Heart left ventricle (tissue), 16 donors: ENCODE measurements at regions of chr20 and their contacts with region 1.

Region 1: DNA sequence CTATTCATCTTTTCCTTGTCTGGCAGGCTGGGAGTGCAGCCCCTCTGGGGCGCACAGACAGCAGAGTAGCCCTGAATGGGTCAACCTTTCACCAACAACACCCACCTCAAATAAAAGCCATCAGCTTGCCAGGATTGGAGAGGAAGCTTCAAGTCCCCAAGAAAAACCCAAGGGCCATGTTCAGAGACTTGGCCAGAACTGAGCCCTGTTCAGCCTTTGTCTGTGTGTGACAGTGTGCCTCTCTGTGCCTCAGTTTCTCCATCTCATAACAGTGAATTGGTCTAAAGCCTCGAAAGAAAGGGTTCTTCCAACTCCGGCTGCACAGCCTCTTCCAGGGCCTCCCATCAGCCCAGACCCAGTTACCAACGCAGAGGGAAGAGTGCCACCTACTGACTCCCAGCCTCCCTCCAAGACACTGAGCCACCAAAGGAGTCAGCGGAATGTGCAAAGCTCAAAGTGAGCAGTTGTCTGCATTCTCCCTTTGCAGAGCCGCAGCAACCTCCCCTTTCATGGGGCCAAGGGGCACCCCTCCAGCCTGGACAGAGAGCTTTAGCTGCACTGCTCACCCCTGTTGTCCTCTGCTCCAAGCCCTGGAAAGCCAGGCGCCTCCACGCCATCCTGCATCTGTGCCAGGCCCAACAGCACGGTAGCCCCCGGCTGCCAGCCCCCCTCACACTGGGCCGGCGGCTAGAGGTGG is 82.7 kb upstream of the TOP1 start:
- DNase-seq: peak in 3 of 5 donors; percentile 58 to 66 (median 60)
- ATAC-seq: peak; percentile 73 to 93 (median 86)
- H3K4me3 ChIP-seq: no peak overlapping the region
- H3K27ac ChIP-seq: no peak overlapping the region
- H3K4me1 ChIP-seq: no peaks in the 10 kb centered on the region
- H3K27me3 ChIP-seq: peaks cover 0 to 21% (median 0%) of the 10 kb centered on the region in 9 donors
- CTCF ChIP-seq: peak in 11 of 12 donors; percentile 38 to 71 (median 60)
- POLR2A ChIP-seq: no peak

Region 2: DNA sequence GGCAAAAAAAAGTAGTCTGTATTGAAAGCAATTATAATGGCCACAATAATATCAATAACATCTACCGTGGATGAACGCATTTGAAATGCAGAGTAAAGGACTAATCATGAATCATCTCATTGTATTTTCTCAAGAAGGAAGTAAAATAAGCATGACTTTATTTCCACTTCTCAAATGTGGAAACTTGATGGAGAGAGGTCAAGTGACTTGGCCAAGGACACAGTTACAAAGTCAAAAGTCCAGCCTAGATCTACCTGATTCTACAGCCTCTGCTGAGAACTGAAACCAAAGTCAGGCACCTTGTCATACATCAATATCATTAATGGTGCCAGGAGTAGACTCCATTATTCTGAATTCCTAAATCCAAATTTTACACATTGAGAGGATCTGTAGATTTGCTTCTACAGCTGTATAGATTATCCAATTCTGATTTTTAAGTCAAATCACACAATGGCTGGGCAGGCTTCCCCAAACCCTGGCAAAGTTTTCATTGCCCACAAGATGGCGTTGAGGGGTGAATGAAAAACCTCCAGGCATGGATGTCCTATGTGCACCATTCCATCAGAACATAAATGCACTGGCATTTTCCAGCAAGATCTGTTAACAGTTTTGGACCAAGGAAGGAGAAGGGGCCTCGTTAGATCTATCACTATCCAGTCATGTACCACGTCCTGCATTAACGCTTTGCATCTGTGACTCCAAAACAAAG is 679.9 kb before region 1 on chr20:
- intact Hi-C with region 1: loop called in 1 of 10 experiments (anchors 10 kb)
- DNase-seq: peak in 1 of 5 donors; percentile 33
- ATAC-seq: peak in 2 of 4 donors; percentile 55 to 66
- H3K4me3 ChIP-seq: no peak overlapping the region
- H3K27ac ChIP-seq: peak overlapping the region in 1 of 12 donors; percentile 9
- H3K4me1 ChIP-seq: peaks cover 0 to 25% (median 0%) of the 10 kb centered on the region in 12 donors
- H3K27me3 ChIP-seq: peaks cover 0 to 3% (median 0%) of the 10 kb centered on the region in 9 donors
- CTCF ChIP-seq: peak in 11 of 12 donors; percentile 20 to 63 (median 41)
- POLR2A ChIP-seq: no peak

Region 3: DNA sequence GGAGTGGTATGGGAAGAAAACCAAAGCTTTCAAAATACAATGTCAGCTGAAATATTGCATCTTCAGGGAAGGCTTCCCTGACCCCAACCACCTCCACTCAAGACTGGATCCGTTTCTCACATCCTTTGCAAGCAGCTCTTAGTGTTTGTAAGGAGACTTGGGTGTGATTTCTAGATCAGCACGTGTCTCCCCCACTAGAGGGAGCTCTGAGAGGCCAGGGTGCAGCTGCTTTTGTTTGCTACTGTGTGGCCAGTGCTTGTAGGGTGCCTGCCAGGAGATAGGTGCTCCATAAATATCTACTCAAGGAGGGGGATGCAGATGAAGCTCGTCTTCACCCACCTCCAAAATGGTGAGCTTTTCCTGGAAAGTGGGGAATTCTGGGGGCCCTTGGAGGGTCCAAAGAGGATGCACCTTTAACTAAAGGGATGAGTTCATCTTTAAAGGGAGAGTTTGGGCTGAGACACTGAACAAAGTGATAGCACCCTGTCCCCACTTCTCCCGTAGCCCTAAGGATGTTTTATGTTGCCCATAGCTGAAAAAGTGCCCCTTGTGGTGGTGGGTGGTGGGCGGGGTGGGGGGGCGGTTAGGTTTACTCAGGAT is 204.3 kb before region 1 on chr20:
- intact Hi-C with region 1: loop called in 5 of 10 experiments (anchors 5 to 10 kb)
- DNase-seq: peak in 3 of 5 donors; percentile 26 to 44 (median 43)
- ATAC-seq: peak in 1 of 4 donors; percentile 42
- H3K4me3 ChIP-seq: no peak overlapping the region
- H3K27ac ChIP-seq: no peak overlapping the region
- H3K4me1 ChIP-seq: no peaks in the 10 kb centered on the region
- H3K27me3 ChIP-seq: peaks cover 0 to 11% (median 0%) of the 10 kb centered on the region in 9 donors
- CTCF ChIP-seq: peak; percentile 41 to 75 (median 56)
- POLR2A ChIP-seq: no peak

Region 4: DNA sequence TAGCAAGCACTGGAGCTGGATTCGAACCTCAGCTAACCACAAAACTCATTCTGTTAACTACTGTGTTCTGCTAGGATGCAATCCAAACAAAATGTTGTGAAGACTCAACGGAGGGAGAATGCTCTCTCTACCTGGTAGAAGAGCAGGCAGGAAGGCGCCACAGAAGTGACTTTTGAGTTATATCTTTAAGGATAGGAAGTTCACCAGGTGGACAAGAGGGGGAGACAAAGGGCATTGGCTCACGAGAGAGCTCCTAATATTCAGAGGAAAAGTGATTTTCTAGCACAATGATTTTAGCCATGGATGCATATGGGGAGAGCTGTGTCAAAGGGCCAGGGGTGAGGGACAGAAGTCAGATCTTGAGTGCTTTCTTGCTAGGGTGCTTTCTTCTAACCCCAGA is 148.5 kb before region 1 on chr20:
- intact Hi-C with region 1: loop called in 3 of 10 experiments (anchors 5 to 10 kb)
- DNase-seq: no peak
- ATAC-seq: no peak
- H3K4me3 ChIP-seq: no peak overlapping the region
- H3K27ac ChIP-seq: no peak overlapping the region
- H3K4me1 ChIP-seq: no peaks in the 10 kb centered on the region
- H3K27me3 ChIP-seq: peaks cover 0 to 4% (median 0%) of the 10 kb centered on the region in 9 donors
- CTCF ChIP-seq: peak in 9 of 12 donors; percentile 15 to 52 (median 33)
- POLR2A ChIP-seq: no peak